ENCODE measurements at regions of chr11 and their contacts with region 1.

Region 1: DNA sequence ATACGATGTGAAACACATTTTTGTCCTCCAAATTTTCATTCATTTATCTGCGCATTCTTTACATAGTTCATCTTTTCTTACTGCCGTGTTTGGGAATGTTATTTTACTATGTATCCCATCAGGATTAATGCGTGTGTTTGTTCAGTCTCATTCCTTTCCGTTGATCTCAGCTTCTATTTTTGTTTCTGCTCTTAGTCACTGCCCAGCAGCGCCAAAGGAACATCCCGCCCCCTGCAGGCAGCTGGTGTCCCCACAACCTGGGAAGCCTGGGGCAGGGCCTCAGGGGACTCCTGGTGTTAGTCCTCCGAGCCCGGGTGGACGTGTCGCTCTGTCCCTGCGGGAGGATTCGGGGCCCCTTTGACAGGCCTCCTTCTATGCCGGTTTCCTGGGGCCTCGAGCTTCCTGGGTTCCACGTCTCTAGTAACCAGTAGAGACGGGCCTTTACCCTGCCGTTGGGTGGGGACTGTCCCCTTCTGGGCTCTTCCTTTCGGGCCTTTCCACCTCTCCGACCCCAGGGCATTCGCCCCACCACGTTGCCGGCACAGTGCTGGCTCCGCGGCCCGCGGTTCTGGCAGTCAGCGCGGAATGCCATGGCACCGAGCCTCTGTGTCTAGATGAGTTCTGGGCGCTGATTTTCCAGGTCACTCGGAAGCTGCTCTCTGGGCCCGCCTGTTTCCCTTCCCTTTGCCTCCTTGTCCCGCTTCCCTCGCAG is 39.8 kb downstream of the WEE1 start:
- DNase-seq: peak; percentile 78 to 85 (median 79)
- H3K4me3 ChIP-seq: peak overlapping the region; percentile 40 to 67
- H3K4me3 Mint-ChIP-seq: peak overlapping the region; percentile 91 to 100 (median 97)
- H3K27ac ChIP-seq: peak overlapping the region; percentile 88
- H3K27ac Mint-ChIP-seq: peak overlapping the region; percentile 94 to 100 (median 98)
- H3K4me1 ChIP-seq: peaks cover 16% of the 10 kb centered on the region
- H3K4me1 Mint-ChIP-seq: peaks cover 12 to 20% (median 14%) of the 10 kb centered on the region in 4 donors
- H3K27me3 ChIP-seq: no peaks in the 10 kb centered on the region
- H3K27me3 Mint-ChIP-seq: no peaks in the 10 kb centered on the region

Region 2: DNA sequence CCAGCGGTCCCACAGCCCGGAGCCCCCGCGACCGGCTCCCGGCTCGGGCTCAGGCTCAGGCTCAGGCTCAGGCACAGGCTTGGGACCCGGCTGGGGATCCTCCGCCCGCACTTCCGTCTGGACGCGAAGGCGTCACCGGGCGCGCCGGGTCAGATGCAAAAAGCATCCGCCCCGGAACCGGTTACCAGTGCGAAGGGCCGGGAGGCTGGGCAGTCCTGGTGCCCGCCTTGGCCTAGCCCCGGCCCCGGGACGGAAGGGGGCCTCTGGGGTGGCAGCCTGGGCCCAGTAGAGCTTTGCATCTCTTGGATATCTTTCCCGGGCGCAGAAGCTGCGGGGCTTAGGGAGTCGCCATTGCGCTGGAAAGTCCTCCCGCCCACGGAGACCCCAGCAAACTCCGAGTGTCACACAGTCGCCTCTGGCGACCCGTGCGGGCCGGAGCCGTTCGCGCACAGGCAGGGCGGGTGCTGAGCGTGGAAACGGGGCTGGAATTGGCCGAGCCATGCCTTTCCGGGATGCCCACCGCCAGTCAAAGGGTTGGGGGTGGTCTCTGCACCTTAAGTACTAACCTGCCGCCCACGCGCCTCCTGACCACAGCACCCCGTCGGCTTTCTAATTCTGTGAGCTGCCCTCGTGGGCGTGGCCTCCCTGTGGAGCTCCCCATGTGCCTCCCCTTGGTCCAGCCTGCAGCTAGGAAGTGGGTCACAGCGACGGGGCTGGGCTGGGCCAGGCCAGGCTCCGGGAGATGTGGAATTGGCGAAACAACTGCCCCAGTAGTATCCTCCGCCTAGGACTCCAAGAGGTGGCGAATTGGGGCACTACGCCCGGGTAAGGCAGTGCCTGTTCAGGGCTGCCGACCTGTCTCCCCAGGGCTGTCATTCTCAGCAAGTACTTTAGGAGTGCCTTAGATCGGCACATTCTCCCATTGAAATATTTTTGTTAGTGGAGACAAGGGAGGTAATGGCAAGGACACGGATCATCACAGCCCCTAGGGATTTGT is 648.7 kb before region 1 on chr11 and contains the start of gene TMEM9B:
- CTCF ChIA-PET with region 1: no interaction called
- POLR2A ChIA-PET with region 1: no interaction called
- intact Hi-C with region 1: loop called (anchors 5 kb)
- DNase-seq: peak; percentile 72 to 83 (median 76)
- H3K4me3 ChIP-seq: peak within 1 kb of the TSS; percentile 89 to 91
- H3K4me3 Mint-ChIP-seq: peak within 1 kb of the TSS; percentile 93 to 98 (median 97)
- H3K27ac ChIP-seq: peak within 1 kb of the TSS; percentile 90
- H3K27ac Mint-ChIP-seq: peak within 1 kb of the TSS; percentile 91 to 99 (median 98)
- H3K4me1 ChIP-seq: peaks cover 26% of the 10 kb centered on the region
- H3K4me1 Mint-ChIP-seq: peaks cover 20 to 41% (median 30%) of the 10 kb centered on the region in 4 donors
- H3K27me3 ChIP-seq: no peaks in the 10 kb centered on the region
- H3K27me3 Mint-ChIP-seq: no peaks in the 10 kb centered on the region
- total RNA-seq, gene TMEM9B: 36.8 to 38.9 TPM

Region 3: GRCh38 chr11:9473408-9473807 is 139.9 kb before region 1 on chr11:
- CTCF ChIA-PET with region 1: no interaction called
- POLR2A ChIA-PET with region 1: no interaction called
- intact Hi-C with region 1: no loop called
- DNase-seq: no peak
- H3K4me3 ChIP-seq: no peak overlapping the region
- H3K4me3 Mint-ChIP-seq: no peak overlapping the region
- H3K27ac ChIP-seq: no peak overlapping the region
- H3K27ac Mint-ChIP-seq: peak overlapping the region in 1 of 7 donors; percentile 13
- H3K4me1 ChIP-seq: no peaks in the 10 kb centered on the region
- H3K4me1 Mint-ChIP-seq: peaks cover under 1 to 11% (median 3%) of the 10 kb centered on the region in 4 donors
- H3K27me3 ChIP-seq: no peaks in the 10 kb centered on the region
- H3K27me3 Mint-ChIP-seq: no peaks in the 10 kb centered on the region

Region 4: GRCh38 chr11:9527481-9528140 is 85.7 kb before region 1 on chr11:
- CTCF ChIA-PET with region 1: interaction called, 267 read pairs
- POLR2A ChIA-PET with region 1: interaction called, 3 read pairs
- intact Hi-C with region 1: no loop called
- DNase-seq: no peak
- H3K4me3 ChIP-seq: no peak overlapping the region
- H3K4me3 Mint-ChIP-seq: no peak overlapping the region
- H3K27ac ChIP-seq: no peak overlapping the region
- H3K27ac Mint-ChIP-seq: peak overlapping the region in 1 of 7 donors; percentile 15
- H3K4me1 ChIP-seq: no peaks in the 10 kb centered on the region
- H3K4me1 Mint-ChIP-seq: peaks cover 0 to 4% (median 0%) of the 10 kb centered on the region in 4 donors
- H3K27me3 ChIP-seq: no peaks in the 10 kb centered on the region
- H3K27me3 Mint-ChIP-seq: no peaks in the 10 kb centered on the region

Region 5: GRCh38 chr11:9573052-9573774 is 40.1 kb before region 1 on chr11 and contains the start of gene WEE1:
- CTCF ChIA-PET with region 1: interaction called, 57 read pairs
- POLR2A ChIA-PET with region 1: interaction called, 91 read pairs
- intact Hi-C with region 1: loop called (anchors 1 kb)
- DNase-seq: peak; percentile 94 to 96 (median 95)
- H3K4me3 ChIP-seq: peak within 1 kb of the TSS; percentile 42 to 80
- H3K4me3 Mint-ChIP-seq: peak within 1 kb of the TSS; percentile 85 to 93 (median 89)
- H3K27ac ChIP-seq: peak within 1 kb of the TSS; percentile 86
- H3K27ac Mint-ChIP-seq: peak within 1 kb of the TSS; percentile 85 to 95 (median 92)
- H3K4me1 ChIP-seq: peaks cover 55% of the 10 kb centered on the region
- H3K4me1 Mint-ChIP-seq: peaks cover 24 to 56% (median 39%) of the 10 kb centered on the region in 4 donors
- H3K27me3 ChIP-seq: no peaks in the 10 kb centered on the region
- H3K27me3 Mint-ChIP-seq: no peaks in the 10 kb centered on the region
- total RNA-seq, gene WEE1: 11.1 to 11.7 TPM

Region 6: GRCh38 chr11:9731256-9731655 is 118.0 kb after region 1 on chr11:
- CTCF ChIA-PET with region 1: no interaction called
- POLR2A ChIA-PET with region 1: no interaction called
- intact Hi-C with region 1: no loop called
- DNase-seq: no peak
- H3K4me3 ChIP-seq: no peak overlapping the region
- H3K4me3 Mint-ChIP-seq: no peak overlapping the region
- H3K27ac ChIP-seq: no peak overlapping the region
- H3K27ac Mint-ChIP-seq: no peak overlapping the region
- H3K4me1 ChIP-seq: no peaks in the 10 kb centered on the region
- H3K4me1 Mint-ChIP-seq: no peaks in the 10 kb centered on the region
- H3K27me3 ChIP-seq: no peaks in the 10 kb centered on the region
- H3K27me3 Mint-ChIP-seq: no peaks in the 10 kb centered on the region

Region 7: DNA sequence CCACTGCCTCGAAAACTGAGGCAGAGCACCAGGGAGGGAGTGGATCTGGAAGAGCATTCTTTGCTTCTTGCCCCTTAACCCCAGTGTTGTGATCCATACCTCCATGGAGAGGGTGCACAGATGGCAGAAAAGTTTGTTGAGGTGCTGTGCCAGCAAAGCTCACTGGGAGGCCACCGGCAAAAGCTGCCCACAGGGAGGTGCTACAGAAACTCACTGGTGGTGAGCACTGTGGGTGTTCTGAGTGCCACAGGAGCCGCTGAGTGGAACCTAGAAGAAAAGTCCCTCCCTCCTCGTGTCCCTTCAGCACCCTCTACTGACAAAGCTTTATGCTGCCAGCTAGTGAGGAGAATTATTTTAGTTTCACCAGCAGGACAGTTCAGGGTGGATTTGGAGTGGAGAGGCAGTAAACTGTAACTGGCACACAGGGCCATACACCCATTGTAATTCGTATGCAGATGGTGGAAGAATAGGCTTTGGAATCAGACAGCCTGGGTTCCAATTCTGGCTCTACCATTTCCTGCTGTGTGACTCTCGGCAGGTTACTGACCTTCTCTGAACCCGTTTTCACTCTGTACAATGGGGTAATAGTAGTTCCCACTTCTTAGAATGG is 135.2 kb after region 1 on chr11:
- CTCF ChIA-PET with region 1: interaction called, 44 read pairs
- POLR2A ChIA-PET with region 1: interaction called, 8 read pairs
- intact Hi-C with region 1: no loop called
- DNase-seq: peak; percentile 44 to 66 (median 54)
- H3K4me3 ChIP-seq: no peak overlapping the region
- H3K4me3 Mint-ChIP-seq: no peak overlapping the region
- H3K27ac ChIP-seq: no peak overlapping the region
- H3K27ac Mint-ChIP-seq: no peak overlapping the region
- H3K4me1 ChIP-seq: no peaks in the 10 kb centered on the region
- H3K4me1 Mint-ChIP-seq: no peaks in the 10 kb centered on the region
- H3K27me3 ChIP-seq: no peaks in the 10 kb centered on the region
- H3K27me3 Mint-ChIP-seq: no peaks in the 10 kb centered on the region